ENCODE measurements at regions of chr17 and their contacts with region 1.

Region 1: DNA sequence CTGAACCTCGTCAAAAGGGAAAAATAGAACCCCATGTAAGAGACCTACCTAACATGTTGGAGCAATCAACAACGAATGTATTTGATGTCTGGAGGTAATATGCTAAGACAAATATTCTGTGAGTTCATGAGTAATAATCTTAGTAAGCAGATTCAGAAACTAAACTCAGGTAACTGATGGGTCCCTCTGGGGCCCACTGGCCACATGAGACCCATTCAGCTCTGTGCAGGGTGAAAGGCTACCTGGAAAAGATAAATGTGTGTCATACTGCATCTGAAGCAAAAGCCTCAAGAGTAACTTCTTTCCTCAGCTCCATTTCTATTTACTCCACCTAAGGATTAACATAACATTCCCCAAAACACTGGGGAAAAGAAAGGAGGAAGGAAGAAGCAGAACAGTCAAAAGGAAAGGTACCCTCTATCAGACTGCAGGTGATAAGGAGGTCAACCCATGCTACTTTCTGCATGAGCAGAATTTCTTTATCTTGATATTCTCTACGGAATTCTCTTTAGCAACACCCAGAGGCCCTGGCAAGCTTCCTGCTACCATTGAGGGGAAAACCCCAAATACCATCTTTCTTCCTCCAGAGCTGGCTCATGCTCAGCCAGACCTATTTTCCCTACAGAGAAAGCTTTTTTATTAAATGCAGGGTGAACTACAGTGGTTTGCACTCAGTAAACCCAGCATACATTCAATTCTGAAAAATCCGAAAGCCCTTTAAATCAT is 37.7 kb upstream of the ABCA6 start:
- DNase-seq: no peak
- ATAC-seq: peak; percentile 78
- H3K4me3 ChIP-seq: no peak overlapping the region
- H3K27ac ChIP-seq: no peak overlapping the region
- H3K4me1 ChIP-seq: no peaks in the 10 kb centered on the region
- H3K27me3 ChIP-seq: no peaks in the 10 kb centered on the region
- CTCF ChIP-seq: no peak
- EP300 ChIP-seq: no peak
- POLR2A ChIP-seq: no peak
- RAD21 ChIP-seq: no peak

Region 2: DNA sequence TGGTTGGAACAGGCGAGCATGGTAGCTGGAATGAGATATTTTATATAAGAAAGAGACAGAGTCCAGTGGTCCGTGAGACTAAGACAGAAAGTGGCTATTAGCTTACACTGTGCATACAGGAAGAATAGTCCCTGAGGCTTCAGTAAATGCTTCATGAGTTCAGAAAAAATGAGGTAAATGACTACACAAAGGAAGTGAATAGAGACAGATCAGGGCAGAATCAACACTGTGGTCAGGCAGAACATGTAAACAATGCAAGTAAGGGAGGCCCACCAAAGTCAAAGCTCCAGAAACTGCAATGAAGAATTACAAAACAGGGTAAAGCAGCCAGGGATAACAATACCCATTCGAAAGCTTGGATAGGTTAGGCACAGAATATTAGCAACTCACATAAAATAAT is 44.4 kb after region 1 on chr17:
- CTCF ChIA-PET with region 1: no interaction called
- POLR2A ChIA-PET with region 1: no interaction called
- RAD21 ChIA-PET with region 1: no interaction called
- SMC1A ChIA-PET with region 1: interaction called, 11 read pairs
- in situ Hi-C with region 1: no loop called
- intact Hi-C with region 1: no loop called
- DNase-seq: peak; percentile 33
- ATAC-seq: peak; percentile 95
- H3K4me3 ChIP-seq: no peak overlapping the region
- H3K27ac ChIP-seq: no peak overlapping the region
- H3K4me1 ChIP-seq: peaks cover 8% of the 10 kb centered on the region
- H3K27me3 ChIP-seq: no peaks in the 10 kb centered on the region
- CTCF ChIP-seq: no peak
- EP300 ChIP-seq: no peak
- POLR2A ChIP-seq: no peak
- RAD21 ChIP-seq: no peak

Measured in GM12878 (cell line).